ENCODE measurements at regions of chr2 and their contacts with region 1.

Region 1: DNA sequence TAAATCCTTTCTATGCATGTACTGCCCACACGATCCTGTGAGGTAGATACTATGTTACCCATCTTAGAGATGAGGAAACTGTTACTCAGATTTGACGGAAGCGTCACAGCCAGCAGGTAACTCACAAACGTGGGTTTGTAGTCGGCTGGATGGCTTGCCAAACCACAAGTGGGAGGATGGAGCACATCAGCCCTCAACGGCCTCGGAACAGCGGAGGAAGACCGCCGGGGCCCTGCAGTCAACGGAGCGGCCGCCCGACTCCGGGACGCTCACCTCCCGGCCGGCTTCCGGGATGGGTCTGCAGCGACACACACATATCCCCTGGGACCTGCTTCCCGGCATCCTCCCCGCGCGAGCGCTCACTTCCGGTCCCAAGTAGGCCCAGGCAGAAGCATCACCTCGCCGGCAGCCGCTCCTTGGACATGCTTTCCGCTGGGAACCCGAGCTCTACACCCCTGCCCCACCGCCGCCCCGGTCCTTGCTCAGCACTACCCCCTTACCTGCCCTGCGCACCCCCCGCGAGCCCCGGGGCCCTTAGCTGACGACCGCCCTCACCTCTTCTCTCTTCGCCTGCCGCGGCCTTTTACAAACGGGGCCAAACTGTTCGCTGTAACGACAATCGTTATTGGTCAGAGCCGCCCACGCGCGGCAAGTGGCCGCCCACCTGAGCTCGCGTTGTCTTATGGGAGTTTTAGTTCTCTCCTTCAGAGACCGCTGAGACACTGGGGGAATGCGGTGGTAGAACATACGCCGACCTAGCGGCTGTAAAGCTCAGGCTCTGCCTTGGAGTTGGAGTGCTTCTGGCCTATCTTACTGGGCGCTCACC is at the start of gene C2orf42:
- DNase-seq: peak; percentile 88 to 98 (median 95)
- ATAC-seq: peak; percentile 83
- H3K4me3 ChIP-seq: peak within 1 kb of the TSS; percentile 82 to 95
- H3K4me3 Mint-ChIP-seq: peak within 1 kb of the TSS; percentile 100
- H3K27ac ChIP-seq: peak within 1 kb of the TSS; percentile 88 to 99
- H3K27ac Mint-ChIP-seq: peak within 1 kb of the TSS; percentile 100
- H3K4me1 ChIP-seq: peaks cover 5% of the 10 kb centered on the region
- H3K4me1 Mint-ChIP-seq: peaks cover 24% of the 10 kb centered on the region
- H3K27me3 ChIP-seq: no peaks in the 10 kb centered on the region
- H3K27me3 Mint-ChIP-seq: peaks cover 2% of the 10 kb centered on the region
- CTCF ChIP-seq: no peak
- total RNA-seq, gene C2orf42: 14.7 to 16.8 TPM

Region 2: GRCh38 chr2:69815717-69816116 is 374.9 kb before region 1 on chr2:
- CTCF ChIA-PET with region 1: no interaction called
- POLR2A ChIA-PET with region 1: no interaction called
- intact Hi-C with region 1: no loop called
- DNase-seq: no peak
- ATAC-seq: no peak
- H3K4me3 ChIP-seq: no peak overlapping the region
- H3K4me3 Mint-ChIP-seq: no peak overlapping the region
- H3K27ac ChIP-seq: no peak overlapping the region
- H3K27ac Mint-ChIP-seq: no peak overlapping the region
- H3K4me1 ChIP-seq: no peaks in the 10 kb centered on the region
- H3K4me1 Mint-ChIP-seq: peaks cover 3% of the 10 kb centered on the region
- H3K27me3 ChIP-seq: no peaks in the 10 kb centered on the region
- H3K27me3 Mint-ChIP-seq: no peaks in the 10 kb centered on the region
- CTCF ChIP-seq: no peak

Region 3: DNA sequence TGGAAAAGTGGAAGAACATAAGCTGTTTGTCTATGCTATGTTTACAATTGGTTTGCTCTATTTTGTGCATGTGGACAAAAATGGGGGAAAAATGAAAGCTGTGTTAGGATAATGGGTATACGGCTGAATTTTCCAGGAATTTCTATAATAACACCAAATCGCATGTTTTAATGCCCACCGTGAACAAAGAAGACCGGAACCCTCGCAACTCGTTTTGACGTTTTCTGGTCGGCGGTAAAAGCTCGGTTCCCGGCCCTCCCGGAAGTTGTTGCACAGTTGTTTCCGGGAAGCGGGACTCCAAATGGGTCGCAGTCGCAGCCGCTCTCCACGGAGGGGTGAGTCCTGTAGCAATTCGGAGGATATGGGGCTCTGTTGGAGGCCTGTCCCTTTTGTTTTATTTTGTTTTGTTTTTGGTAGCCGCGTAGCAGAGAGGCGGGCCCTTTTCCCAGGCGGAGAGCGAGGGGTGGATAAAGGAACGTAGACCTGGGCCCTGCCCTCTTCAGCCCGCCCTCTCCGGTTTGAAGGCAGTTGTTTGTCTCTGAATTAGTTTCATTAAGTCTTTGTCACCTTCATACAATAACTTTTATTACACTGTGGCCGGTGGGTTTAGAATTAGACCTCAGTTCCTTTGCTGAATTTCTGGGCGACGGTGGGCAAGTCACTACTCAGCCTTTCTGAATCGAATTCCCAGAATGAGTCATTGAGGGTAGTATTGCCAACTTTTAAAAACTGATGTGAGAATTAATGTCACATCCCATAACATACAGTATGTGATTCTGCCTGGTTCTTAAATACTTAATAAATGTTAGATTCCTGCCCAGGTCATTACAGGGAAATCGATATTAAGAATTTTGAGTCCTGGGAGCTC is 296.7 kb before region 1 on chr2 and contains the start of gene SNRNP27:
- CTCF ChIA-PET with region 1: no interaction called
- POLR2A ChIA-PET with region 1: interaction called, 7 read pairs
- intact Hi-C with region 1: loop called (anchors 1 kb)
- DNase-seq: peak; percentile 71 to 89 (median 83)
- ATAC-seq: peak; percentile 92
- H3K4me3 ChIP-seq: peak within 1 kb of the TSS; percentile 85 to 88
- H3K4me3 Mint-ChIP-seq: peak within 1 kb of the TSS; percentile 99
- H3K27ac ChIP-seq: peak within 1 kb of the TSS; percentile 82 to 86
- H3K27ac Mint-ChIP-seq: peak within 1 kb of the TSS; percentile 99
- H3K4me1 ChIP-seq: peaks cover 13% of the 10 kb centered on the region
- H3K4me1 Mint-ChIP-seq: peaks cover 46% of the 10 kb centered on the region
- H3K27me3 ChIP-seq: no peaks in the 10 kb centered on the region
- H3K27me3 Mint-ChIP-seq: no peaks in the 10 kb centered on the region
- CTCF ChIP-seq: no peak
- total RNA-seq, gene SNRNP27: 47.9 to 58.5 TPM

Region 4: DNA sequence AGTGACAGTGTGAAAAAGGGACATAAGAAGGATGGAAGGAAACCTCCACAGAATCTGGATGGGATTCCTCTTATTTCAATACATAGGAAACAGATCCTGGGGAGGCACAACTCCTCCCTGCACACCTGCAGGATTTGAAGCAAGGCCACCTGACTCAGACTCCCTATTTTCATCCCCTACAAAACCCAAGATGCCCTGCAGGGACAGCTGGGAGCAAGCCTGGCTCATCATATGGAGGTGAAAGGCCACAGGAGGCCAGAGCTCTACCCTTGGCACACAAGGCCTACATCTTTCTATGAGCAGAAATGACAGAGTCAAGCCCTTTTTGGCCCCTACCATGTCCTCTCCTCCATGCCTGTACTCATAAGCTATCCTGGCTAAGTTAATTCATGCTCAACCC is 138.0 kb before region 1 on chr2:
- CTCF ChIA-PET with region 1: no interaction called
- POLR2A ChIA-PET with region 1: no interaction called
- intact Hi-C with region 1: no loop called
- DNase-seq: no peak
- ATAC-seq: no peak
- H3K4me3 ChIP-seq: no peak overlapping the region
- H3K4me3 Mint-ChIP-seq: no peak overlapping the region
- H3K27ac ChIP-seq: no peak overlapping the region
- H3K27ac Mint-ChIP-seq: no peak overlapping the region
- H3K4me1 ChIP-seq: no peaks in the 10 kb centered on the region
- H3K4me1 Mint-ChIP-seq: peaks cover 2% of the 10 kb centered on the region
- H3K27me3 ChIP-seq: no peaks in the 10 kb centered on the region
- H3K27me3 Mint-ChIP-seq: no peaks in the 10 kb centered on the region
- CTCF ChIP-seq: no peak

Region 5: GRCh38 chr2:70086838-70087701 is 103.6 kb before region 1 on chr2 and contains the start of gene PCBP1:
- CTCF ChIA-PET with region 1: interaction called, 3 read pairs
- POLR2A ChIA-PET with region 1: interaction called, 17 read pairs
- intact Hi-C with region 1: loop called (anchors 1 kb)
- DNase-seq: peak; percentile 95 to 100 (median 98)
- ATAC-seq: peak; percentile 60
- H3K4me3 ChIP-seq: peak within 1 kb of the TSS; percentile 95 to 98
- H3K4me3 Mint-ChIP-seq: peak within 1 kb of the TSS; percentile 98
- H3K27ac ChIP-seq: peak within 1 kb of the TSS; percentile 99
- H3K27ac Mint-ChIP-seq: peak within 1 kb of the TSS; percentile 100
- H3K4me1 ChIP-seq: peaks cover 62% of the 10 kb centered on the region
- H3K4me1 Mint-ChIP-seq: peaks cover 69% of the 10 kb centered on the region
- H3K27me3 ChIP-seq: no peaks in the 10 kb centered on the region
- H3K27me3 Mint-ChIP-seq: no peaks in the 10 kb centered on the region
- CTCF ChIP-seq: no peak
- total RNA-seq, gene PCBP1: 239 to 255 TPM

Region 6: DNA sequence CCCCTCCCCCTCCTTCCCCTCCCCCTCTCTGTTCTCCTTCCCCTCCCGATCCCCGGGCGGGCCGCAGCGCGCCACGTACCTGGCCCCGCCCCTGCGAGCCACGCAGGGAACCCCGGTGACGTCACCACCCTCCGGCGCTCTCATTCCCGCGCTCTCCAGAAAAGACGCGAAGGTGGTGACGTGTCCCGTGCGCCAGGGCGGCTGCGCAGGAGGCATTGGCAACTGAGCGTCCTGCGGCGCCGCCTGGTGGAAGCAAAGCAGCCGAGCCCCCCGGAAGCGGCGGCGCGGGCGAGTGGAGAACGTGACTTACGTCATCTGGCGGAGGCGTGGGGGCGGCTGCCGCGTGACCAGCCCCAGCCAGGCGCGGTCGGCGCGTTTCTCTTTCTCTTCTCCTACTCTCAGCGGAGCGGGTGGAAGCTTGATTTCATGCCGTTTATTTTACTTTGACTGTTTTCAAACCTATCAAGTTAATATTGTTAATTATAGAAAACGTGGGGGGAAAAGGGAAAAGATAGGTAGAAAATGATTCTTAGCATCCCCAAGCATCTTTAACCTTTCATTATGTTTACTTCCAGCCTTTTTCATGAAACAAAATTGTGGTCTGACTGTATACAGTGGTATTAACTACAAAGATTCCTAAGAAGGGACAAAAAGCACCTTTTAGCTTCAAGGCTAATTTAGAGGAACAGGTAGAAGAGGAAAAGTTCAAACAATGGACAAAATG is 47.9 kb before region 1 on chr2:
- CTCF ChIA-PET with region 1: no interaction called
- POLR2A ChIA-PET with region 1: interaction called, 18 read pairs
- intact Hi-C with region 1: loop called (anchors 1 kb)
- DNase-seq: peak; percentile 99 to 100 (median 100)
- ATAC-seq: peak; percentile 73
- H3K4me3 ChIP-seq: peak overlapping the region; percentile 54 to 56
- H3K4me3 Mint-ChIP-seq: peak overlapping the region; percentile 91
- H3K27ac ChIP-seq: peak overlapping the region; percentile 89 to 97
- H3K27ac Mint-ChIP-seq: peak overlapping the region; percentile 100
- H3K4me1 ChIP-seq: peaks cover 49% of the 10 kb centered on the region
- H3K4me1 Mint-ChIP-seq: peaks cover 53% of the 10 kb centered on the region
- H3K27me3 ChIP-seq: no peaks in the 10 kb centered on the region
- H3K27me3 Mint-ChIP-seq: no peaks in the 10 kb centered on the region
- CTCF ChIP-seq: peak; percentile 89

Region 7: GRCh38 chr2:70233926-70234325 is 43.3 kb after region 1 on chr2:
- CTCF ChIA-PET with region 1: no interaction called
- POLR2A ChIA-PET with region 1: no interaction called
- intact Hi-C with region 1: no loop called
- DNase-seq: no peak
- ATAC-seq: no peak
- H3K4me3 ChIP-seq: no peak overlapping the region
- H3K4me3 Mint-ChIP-seq: no peak overlapping the region
- H3K27ac ChIP-seq: no peak overlapping the region
- H3K27ac Mint-ChIP-seq: no peak overlapping the region
- H3K4me1 ChIP-seq: no peaks in the 10 kb centered on the region
- H3K4me1 Mint-ChIP-seq: peaks cover 3% of the 10 kb centered on the region
- H3K27me3 ChIP-seq: no peaks in the 10 kb centered on the region
- H3K27me3 Mint-ChIP-seq: no peaks in the 10 kb centered on the region
- CTCF ChIP-seq: no peak

Region 8: GRCh38 chr2:70258532-70258874 is 67.9 kb after region 1 on chr2:
- CTCF ChIA-PET with region 1: no interaction called
- POLR2A ChIA-PET with region 1: interaction called, 26 read pairs
- intact Hi-C with region 1: no loop called
- DNase-seq: no peak
- ATAC-seq: no peak
- H3K4me3 ChIP-seq: peak overlapping the region; percentile 62 to 88
- H3K4me3 Mint-ChIP-seq: peak overlapping the region; percentile 86
- H3K27ac ChIP-seq: peak overlapping the region in 1 of 2 experiments; percentile 54
- H3K27ac Mint-ChIP-seq: peak overlapping the region; percentile 77
- H3K4me1 ChIP-seq: peaks cover 15% of the 10 kb centered on the region
- H3K4me1 Mint-ChIP-seq: peaks cover 42% of the 10 kb centered on the region
- H3K27me3 ChIP-seq: no peaks in the 10 kb centered on the region
- H3K27me3 Mint-ChIP-seq: no peaks in the 10 kb centered on the region
- CTCF ChIP-seq: no peak

Measured in CD8-positive, alpha-beta T cell (primary cell).